Dendritic cell treated with granulocyte-macrophage colony-stimulating factor and Interleukin-4, amounts not matched to agents 40 ng/mL and 50 ng/mL, for 4 days (primary cell): ENCODE measurements at regions of chr19 and their contacts with region 1.

Region 1: GRCh38 chr19:41872775-41873647 is 4.1 kb upstream of the CD79A start:
- H3K4me3 Mint-ChIP-seq: no peak overlapping the region
- H3K27ac Mint-ChIP-seq: no peak overlapping the region
- H3K4me1 Mint-ChIP-seq: peaks cover 76% of the 10 kb centered on the region
- H3K27me3 Mint-ChIP-seq: no peaks in the 10 kb centered on the region

Region 2: DNA sequence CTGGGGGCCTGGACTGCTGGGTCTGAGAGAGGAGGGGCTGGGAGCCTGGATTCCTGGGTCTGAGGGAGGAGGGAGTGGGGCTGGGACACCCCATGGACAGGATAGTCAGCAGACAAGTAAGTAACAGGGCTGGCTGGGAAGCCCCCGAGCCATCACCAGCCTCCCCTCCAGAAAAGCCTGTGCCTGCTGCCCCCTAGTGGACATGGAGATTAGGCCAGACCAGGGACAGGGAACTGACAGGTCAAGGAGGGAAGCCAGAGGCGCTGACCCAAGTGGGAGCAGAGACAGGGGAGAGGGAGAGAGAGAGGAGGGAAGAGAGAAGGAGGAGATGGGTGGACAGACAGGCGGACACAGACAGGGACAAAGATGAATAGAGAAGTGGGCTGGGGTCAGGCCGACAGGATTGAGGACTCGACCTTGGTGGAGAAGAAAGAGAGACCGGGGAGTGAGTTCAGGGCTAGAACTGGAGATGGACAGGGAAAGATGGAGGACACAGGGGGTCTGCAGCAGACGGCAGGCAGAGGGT is 61.9 kb after region 1 on chr19:
- intact Hi-C with region 1: loop called (anchors 2 kb)
- H3K4me3 Mint-ChIP-seq: no peak overlapping the region
- H3K27ac Mint-ChIP-seq: no peak overlapping the region
- H3K4me1 Mint-ChIP-seq: peaks cover 25% of the 10 kb centered on the region
- H3K27me3 Mint-ChIP-seq: peaks cover 82% of the 10 kb centered on the region

Region 3: DNA sequence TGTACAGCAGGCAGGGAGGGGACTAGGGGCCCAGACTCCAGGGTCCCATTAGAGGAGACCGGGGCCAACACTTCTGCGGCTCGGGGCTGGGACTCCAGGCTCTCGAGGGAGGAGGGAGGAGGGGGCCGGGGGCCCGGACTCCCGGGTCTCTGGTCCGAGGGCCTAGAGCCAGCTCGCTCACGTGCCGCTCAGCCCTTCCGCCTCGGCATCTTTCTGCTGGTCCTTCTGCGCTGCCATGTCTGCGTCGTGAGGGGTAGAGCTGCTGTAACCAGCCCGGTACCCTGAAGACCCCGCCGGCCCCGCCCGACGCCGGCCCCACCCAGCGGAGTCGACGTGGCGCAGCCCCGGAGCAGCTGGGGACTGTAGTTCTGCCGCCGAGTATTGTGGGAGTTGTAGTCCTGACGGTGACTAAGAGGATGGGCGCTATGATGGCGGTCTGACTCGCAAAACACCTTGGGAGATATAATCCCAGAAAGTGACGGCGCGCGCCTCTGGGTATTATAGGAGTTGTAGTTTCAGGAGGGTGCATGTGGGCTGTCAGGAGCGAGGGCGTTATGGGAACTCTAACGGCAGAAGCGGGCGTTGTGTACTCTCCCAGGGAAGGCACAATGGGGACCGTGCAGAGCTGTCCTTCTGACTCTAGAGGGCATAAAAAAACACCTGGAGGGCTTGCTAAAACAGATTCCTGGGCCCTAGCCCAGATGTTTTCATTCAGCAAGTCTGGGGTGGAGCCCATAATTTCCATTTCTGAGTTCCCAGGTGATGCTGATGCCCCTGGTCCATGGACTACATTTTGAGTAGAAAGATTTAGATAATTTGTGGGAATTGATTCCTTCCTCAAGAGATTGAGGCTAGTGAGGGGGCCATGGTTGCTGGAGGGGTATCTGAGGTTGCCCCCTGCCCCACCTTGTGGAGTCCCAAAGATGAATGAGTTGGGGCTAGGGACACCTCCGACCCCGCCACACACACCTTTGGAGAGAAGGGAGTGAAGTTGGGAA is 86.3 kb after region 1 on chr19 and contains the start of gene RABAC1:
- intact Hi-C with region 1: loop called (anchors 5 kb)
- H3K4me3 Mint-ChIP-seq: peak within 1 kb of the TSS; percentile 91
- H3K27ac Mint-ChIP-seq: peak within 1 kb of the TSS; percentile 54
- H3K4me1 Mint-ChIP-seq: peaks cover 30% of the 10 kb centered on the region
- H3K27me3 Mint-ChIP-seq: no peaks in the 10 kb centered on the region